SK-N-SH (cell line): ENCODE measurements at regions of chr17 and their contacts with region 1.

Region 1: GRCh38 chr17:73710095-73710592 is 65.9 kb upstream of the SDK2 start:
- DNase-seq: peak; percentile 81
- H3K4me3 ChIP-seq: no peak overlapping the region; a peak in 1 of 4 replicates
- H3K27ac ChIP-seq: no peak overlapping the region
- H3K4me1 ChIP-seq: peaks cover 0 to 15% of the 10 kb centered on the region in 2 experiments; a peak in 2 of 4 replicates
- H3K27me3 ChIP-seq: no peaks in the 10 kb centered on the region
- CTCF ChIP-seq: peak; percentile 51
- EP300 ChIP-seq: no peak
- RAD21 ChIP-seq: peak; percentile 87

Region 2: GRCh38 chr17:73446617-73447016 is 263.5 kb before region 1 on chr17:
- CTCF ChIA-PET with region 1: interaction called, 10 read pairs
- POLR2A ChIA-PET with region 1: no interaction called
- DNase-seq: no peak
- H3K4me3 ChIP-seq: no peak overlapping the region
- H3K27ac ChIP-seq: no peak overlapping the region
- H3K4me1 ChIP-seq: peaks cover 0 to 6% of the 10 kb centered on the region in 2 experiments; a peak in 1 of 4 replicates
- H3K27me3 ChIP-seq: no peaks in the 10 kb centered on the region
- CTCF ChIP-seq: no peak
- EP300 ChIP-seq: no peak
- RAD21 ChIP-seq: no peak

Region 3: GRCh38 chr17:73650617-73651200 is 59.4 kb before region 1 on chr17:
- CTCF ChIA-PET with region 1: interaction called, 64 read pairs
- POLR2A ChIA-PET with region 1: no interaction called
- DNase-seq: no peak
- H3K4me3 ChIP-seq: no peak overlapping the region
- H3K27ac ChIP-seq: no peak overlapping the region
- H3K4me1 ChIP-seq: peaks cover 0 to 7% of the 10 kb centered on the region in 2 experiments; a peak in 2 of 4 replicates
- H3K27me3 ChIP-seq: peaks cover 11% of the 10 kb centered on the region
- CTCF ChIP-seq: no peak
- EP300 ChIP-seq: no peak
- RAD21 ChIP-seq: no peak

Region 4: GRCh38 chr17:73663564-73664160 is 46.5 kb before region 1 on chr17:
- CTCF ChIA-PET with region 1: interaction called, 13 read pairs
- POLR2A ChIA-PET with region 1: no interaction called
- DNase-seq: no peak
- H3K4me3 ChIP-seq: no peak overlapping the region
- H3K27ac ChIP-seq: no peak overlapping the region
- H3K4me1 ChIP-seq: no peaks in the 10 kb centered on the region
- H3K27me3 ChIP-seq: no peaks in the 10 kb centered on the region
- CTCF ChIP-seq: no peak
- EP300 ChIP-seq: no peak
- RAD21 ChIP-seq: no peak

Region 5: GRCh38 chr17:73697872-73698271 is 12.3 kb before region 1 on chr17:
- CTCF ChIA-PET with region 1: interaction called, 19 read pairs
- POLR2A ChIA-PET with region 1: no interaction called
- DNase-seq: no peak
- H3K4me3 ChIP-seq: no peak overlapping the region
- H3K27ac ChIP-seq: no peak overlapping the region
- H3K4me1 ChIP-seq: peaks cover 0 to under 1% of the 10 kb centered on the region in 2 experiments; a peak in 1 of 4 replicates
- H3K27me3 ChIP-seq: no peaks in the 10 kb centered on the region
- CTCF ChIP-seq: no peak
- EP300 ChIP-seq: no peak
- RAD21 ChIP-seq: 0 out of 2 replicates have a peak, but pooled peaks have one; percentile 2

Region 6: DNA sequence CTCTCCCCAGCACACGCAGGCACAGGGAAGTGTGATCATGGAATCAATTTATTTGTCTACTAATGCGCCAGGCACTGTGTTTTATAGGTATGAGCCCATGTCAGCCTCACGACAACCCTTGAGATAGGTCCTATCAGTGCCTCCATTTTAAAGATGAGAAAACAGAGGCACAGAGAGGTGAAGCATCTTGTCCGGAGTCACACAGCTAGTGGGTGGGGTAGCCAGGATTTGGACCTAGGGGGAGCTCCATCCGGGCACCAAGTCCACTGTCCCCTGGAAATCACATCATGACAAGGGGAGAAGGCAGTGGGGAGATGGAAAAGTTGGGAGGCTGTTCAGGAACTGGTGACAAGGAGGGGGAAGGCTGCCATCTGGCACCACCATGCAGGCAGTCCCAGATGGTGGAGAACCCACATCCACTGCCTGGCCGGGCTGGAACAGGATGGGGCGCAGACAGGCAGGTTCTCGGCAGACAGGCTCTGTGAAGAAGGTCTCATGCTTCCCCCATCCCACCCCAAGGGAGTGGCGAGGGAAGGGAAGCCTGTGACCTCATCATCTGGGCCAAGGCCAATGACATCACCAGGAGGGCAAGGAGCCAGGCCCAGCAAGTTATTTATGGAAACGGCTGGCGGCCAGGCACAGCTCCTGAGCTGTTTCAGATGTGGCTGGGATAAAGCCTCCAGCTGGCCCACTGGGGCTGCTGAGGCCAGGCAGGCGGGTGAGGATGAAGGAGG is 60.1 kb after region 1 on chr17:
- CTCF ChIA-PET with region 1: interaction called, 11 read pairs
- POLR2A ChIA-PET with region 1: no interaction called
- DNase-seq: peak; percentile 88
- H3K4me3 ChIP-seq: no peak overlapping the region; a peak in 1 of 4 replicates
- H3K27ac ChIP-seq: peak overlapping the region in 1 of 2 experiments; percentile 86; a peak in 3 of 4 replicates
- H3K4me1 ChIP-seq: peaks cover 0 to 53% of the 10 kb centered on the region in 2 experiments; a peak in 2 of 4 replicates
- H3K27me3 ChIP-seq: no peaks in the 10 kb centered on the region
- CTCF ChIP-seq: no peak
- EP300 ChIP-seq: peak in 1 of 2 experiments; percentile 77; a peak in 2 of 4 replicates
- RAD21 ChIP-seq: no peak

Region 7: GRCh38 chr17:73815474-73815873 is 105.3 kb after region 1 on chr17:
- CTCF ChIA-PET with region 1: no interaction called
- POLR2A ChIA-PET with region 1: no interaction called
- DNase-seq: no peak
- H3K4me3 ChIP-seq: no peak overlapping the region
- H3K27ac ChIP-seq: no peak overlapping the region
- H3K4me1 ChIP-seq: no peaks in the 10 kb centered on the region; a peak in 1 of 4 replicates
- H3K27me3 ChIP-seq: no peaks in the 10 kb centered on the region
- CTCF ChIP-seq: no peak
- EP300 ChIP-seq: no peak
- RAD21 ChIP-seq: no peak